Tibial artery (tissue), 4 donors: ENCODE measurements at regions of chr1 and their contacts with region 1.

Region 1: GRCh38 chr1:23344111-23344986 is at the start of gene HNRNPR:
- DNase-seq: peak; percentile 99 to 100
- H3K4me3 ChIP-seq: peak within 1 kb of the TSS; percentile 80 to 89
- H3K27ac ChIP-seq: peak within 1 kb of the TSS; percentile 95 to 98
- H3K4me1 ChIP-seq: peaks cover 0 to 43% (median 29%) of the 10 kb centered on the region in 4 donors
- H3K27me3 ChIP-seq: no peaks in the 10 kb centered on the region
- CTCF ChIP-seq: peak in 1 of 2 experiments; percentile 10

Region 2: DNA sequence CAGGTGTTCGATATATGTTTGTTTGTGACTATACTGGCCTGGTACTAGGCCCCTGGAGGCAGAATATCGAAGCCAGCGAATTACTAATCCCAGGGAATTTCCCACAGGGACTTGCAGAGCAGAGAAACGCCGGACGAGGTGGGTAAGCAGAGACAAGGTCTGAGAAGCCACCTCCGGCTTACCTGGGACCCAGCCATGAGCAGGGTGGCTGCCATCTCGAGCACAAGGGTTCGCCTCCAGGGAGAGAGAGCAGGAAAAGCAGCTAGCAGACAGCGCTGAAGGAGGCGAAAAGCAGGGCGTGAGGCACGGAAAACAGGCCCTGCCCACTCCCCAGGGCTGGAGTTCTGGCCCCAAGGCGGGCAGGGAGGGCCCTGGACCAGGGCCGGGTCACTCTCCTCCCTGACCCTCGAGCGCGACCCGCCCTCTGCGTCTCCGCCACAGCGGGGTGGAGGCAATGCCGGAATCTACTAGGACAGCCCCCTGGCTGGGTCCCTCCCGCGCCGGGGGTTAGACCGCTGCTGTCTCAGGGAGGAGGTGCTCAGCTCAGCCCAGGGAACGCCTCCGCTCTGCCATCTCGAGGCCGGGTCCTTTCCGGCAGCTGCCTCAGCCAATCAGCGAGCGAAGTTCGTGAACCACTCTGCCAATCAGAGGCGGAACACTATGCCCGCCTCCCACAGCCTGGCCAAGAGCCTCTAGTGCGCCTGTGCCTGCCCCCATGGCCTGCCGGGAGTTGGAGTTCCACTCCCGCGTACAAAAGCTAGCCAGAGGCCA is 23.6 kb after region 1 on chr1:
- intact Hi-C with region 1: loop called (anchors 2 kb)
- DNase-seq: peak; percentile 98 to 99
- H3K4me3 ChIP-seq: peak overlapping the region; percentile 71 to 95
- H3K27ac ChIP-seq: peak overlapping the region; percentile 98 to 99
- H3K4me1 ChIP-seq: peaks cover 0 to 47% (median 39%) of the 10 kb centered on the region in 4 donors
- H3K27me3 ChIP-seq: no peaks in the 10 kb centered on the region
- CTCF ChIP-seq: no peak